ENCODE measurements at regions of chrX and their contacts with region 1.

Region 1: DNA sequence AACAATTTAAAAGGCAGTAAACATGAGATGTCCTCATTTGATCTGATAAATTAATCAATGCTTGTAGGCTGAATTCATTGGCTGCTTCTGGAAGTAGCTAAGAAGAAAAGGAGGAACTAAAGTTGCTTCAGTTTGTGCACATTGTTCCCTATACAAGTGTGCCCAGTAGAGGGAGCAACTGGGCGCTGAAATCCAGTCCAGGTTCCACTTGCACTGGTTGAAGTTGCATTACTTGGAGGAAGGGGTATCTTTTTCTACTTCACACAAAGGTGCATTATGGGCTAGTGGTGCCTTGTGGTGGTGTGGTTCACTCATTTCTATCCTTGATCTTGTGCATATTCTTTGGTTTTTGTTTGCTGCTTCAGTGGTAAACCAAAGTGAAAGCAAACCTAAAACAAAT is 67.9 kb upstream of the SOX3 start:
- DNase-seq: no peak
- ATAC-seq: no peak
- H3K4me3 ChIP-seq: no peak overlapping the region
- H3K27ac ChIP-seq: no peak overlapping the region
- H3K4me1 ChIP-seq: no peaks in the 10 kb centered on the region
- H3K27me3 ChIP-seq: no peaks in the 10 kb centered on the region

Region 2: GRCh38 chrX:140526171-140526570 is 46.6 kb before region 1 on chrX:
- intact Hi-C with region 1: no loop called
- DNase-seq: no peak
- ATAC-seq: no peak
- H3K4me3 ChIP-seq: no peak overlapping the region
- H3K27ac ChIP-seq: no peak overlapping the region
- H3K4me1 ChIP-seq: no peaks in the 10 kb centered on the region
- H3K27me3 ChIP-seq: no peaks in the 10 kb centered on the region

Region 3: DNA sequence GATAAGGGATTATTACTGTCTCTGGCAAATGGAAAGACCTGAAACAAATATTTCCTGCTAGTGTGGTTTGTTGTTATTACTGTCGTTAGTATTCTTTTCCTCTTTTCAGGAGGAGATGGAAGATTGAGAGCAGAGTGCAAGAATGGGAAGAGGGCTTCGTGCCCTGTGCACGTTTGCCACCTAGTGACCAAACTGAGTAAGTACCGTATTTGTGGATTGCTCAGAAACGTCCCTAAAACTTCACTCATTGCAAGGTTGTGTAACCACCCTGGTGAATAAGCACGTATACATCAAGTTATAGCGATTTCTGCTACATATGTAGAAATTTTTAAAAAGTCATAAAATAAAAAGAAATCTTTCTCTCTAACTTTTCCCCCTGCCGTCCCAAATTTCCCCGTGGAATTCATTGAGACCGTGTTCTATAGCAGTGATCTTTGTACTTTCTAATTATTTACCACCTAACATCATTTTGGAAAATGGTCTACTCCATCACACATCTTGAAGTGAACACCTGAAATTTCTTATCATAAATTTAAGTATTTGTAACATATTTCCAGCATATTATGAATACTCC is 161.1 kb after region 1 on chrX:
- intact Hi-C with region 1: loop called in 1 of 2 experiments (anchors 5 kb)
- DNase-seq: no peak
- ATAC-seq: peak; percentile 65
- H3K4me3 ChIP-seq: no peak overlapping the region
- H3K27ac ChIP-seq: no peak overlapping the region
- H3K4me1 ChIP-seq: no peaks in the 10 kb centered on the region
- H3K27me3 ChIP-seq: no peaks in the 10 kb centered on the region

Measured in aorta (tissue), 5 donors.